Endothelial cell of umbilical vein (primary cell): ENCODE measurements at regions of chr20 and their contacts with region 1.

Region 1: DNA sequence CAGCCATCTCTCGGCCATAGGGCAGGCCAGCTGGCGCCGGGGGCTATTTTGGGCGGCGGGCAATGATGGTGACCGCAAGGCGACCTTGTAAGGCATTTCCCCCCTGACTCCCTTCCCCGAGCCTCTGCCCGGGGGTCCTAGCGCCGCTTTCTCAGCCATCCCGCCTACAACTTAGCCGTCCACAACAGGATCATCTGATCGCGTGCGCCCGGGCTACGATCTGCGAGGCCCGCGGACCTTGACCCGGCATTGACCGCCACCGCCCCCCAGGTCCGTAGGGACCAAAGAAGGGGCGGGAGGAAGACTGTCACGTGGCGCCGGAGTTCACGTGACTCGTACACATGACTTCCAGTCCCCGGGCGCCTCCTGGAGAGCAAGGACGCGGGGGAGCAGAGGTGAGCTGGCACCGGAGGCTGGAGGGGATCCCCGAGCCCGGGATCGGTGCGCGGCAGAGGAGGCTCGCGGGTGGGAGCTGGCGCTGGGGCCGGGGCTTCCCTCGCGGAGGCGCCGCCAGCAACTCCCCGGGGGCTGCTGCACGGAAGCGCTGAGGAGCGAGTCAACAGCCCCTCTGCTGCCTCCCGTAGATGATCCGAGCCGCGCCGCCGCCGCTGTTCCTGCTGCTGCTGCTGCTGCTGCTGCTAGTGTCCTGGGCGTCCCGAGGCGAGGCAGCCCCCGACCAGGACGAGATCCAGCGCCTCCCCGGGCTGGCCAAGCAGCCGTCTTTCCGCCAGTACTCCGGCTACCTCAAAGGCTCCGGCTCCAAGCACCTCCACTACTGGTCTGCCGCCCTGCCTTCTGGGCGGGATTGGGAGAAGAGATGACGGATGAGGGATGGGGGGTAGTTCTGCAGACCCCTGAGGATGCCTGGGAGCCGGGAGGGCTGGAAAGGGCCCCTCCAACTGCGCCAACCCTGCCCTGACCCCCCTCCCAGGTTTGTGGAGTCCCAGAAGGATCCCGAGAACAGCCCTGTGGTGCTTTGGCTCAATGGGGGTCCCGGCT is at the starts of genes CTSA and NEURL2:
- DNase-seq: peak; percentile 88
- H3K4me3 ChIP-seq: peak within 1 kb of the TSS; percentile 47 to 81 (median 57)
- H3K27ac ChIP-seq: peak within 1 kb of the TSS; percentile 50
- H3K4me1 ChIP-seq: peaks cover 22% of the 10 kb centered on the region
- H3K27me3 ChIP-seq: no peaks in the 10 kb centered on the region
- CTCF ChIP-seq: no peak
- POLR2A ChIP-seq: peak; percentile 74
- total RNA-seq, gene CTSA: 156 and 169 TPM in 2 replicates
- total RNA-seq, gene NEURL2: 5.4 and 6.5 TPM in 2 replicates

Region 2: DNA sequence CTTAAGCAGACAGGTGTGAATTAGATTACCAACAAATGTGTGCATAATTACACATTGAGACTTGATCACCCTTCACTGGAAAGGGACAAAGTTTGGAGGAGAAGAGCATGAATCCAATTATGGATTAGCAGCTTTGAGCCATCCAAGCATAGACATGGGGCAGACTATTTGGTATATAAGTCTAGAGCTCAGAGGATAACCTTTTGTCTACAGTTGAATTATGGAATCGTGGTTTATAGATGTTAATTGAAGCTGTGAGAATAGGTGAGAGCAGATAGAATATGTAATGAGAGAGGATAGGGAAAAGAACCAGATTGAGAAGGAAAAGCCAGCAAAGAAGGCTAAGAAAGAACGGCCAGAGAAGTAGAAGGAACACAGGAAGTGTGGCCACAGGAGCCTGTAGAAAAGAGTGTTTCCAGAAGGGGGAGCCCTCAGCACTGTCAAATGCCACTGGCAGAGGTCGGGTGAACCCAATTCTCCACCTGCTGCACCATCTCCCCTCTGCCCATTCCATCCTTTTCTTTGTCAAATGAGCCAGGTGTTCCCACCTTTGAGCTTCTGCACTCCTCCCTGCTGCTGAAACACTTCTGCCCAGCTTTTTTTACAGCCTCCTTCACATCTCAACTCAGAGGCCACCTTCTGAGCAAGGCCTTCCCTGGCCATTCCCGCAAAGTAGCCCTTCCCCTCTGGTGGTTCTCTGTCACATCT is 92.2 kb before region 1 on chr20:
- CTCF ChIA-PET with region 1: interaction called, 7 read pairs
- POLR2A ChIA-PET with region 1: no interaction called
- dilution Hi-C with region 1: no loop called
- intact Hi-C with region 1: loop called (anchors 1 kb)
- DNase-seq: peak; percentile 57
- H3K4me3 ChIP-seq: no peak overlapping the region
- H3K27ac ChIP-seq: no peak overlapping the region
- H3K4me1 ChIP-seq: no peaks in the 10 kb centered on the region
- H3K27me3 ChIP-seq: no peaks in the 10 kb centered on the region
- CTCF ChIP-seq: peak; percentile 69 to 85
- POLR2A ChIP-seq: no peak

Region 3: GRCh38 chr20:45833030-45833882 is 58.0 kb before region 1 on chr20 and contains the start of gene SNX21:
- CTCF ChIA-PET with region 1: interaction called, 6 read pairs
- POLR2A ChIA-PET with region 1: no interaction called
- dilution Hi-C with region 1: no loop called
- intact Hi-C with region 1: loop called (anchors 2 kb)
- DNase-seq: peak; percentile 78
- H3K4me3 ChIP-seq: peak within 1 kb of the TSS; percentile 35 to 64 (median 47)
- H3K27ac ChIP-seq: peak within 1 kb of the TSS; percentile 71
- H3K4me1 ChIP-seq: peaks cover 20% of the 10 kb centered on the region
- H3K27me3 ChIP-seq: no peaks in the 10 kb centered on the region
- CTCF ChIP-seq: no peak
- POLR2A ChIP-seq: no peak
- total RNA-seq, gene SNX21: 11.9 and 14.9 TPM in 2 replicates

Region 4: DNA sequence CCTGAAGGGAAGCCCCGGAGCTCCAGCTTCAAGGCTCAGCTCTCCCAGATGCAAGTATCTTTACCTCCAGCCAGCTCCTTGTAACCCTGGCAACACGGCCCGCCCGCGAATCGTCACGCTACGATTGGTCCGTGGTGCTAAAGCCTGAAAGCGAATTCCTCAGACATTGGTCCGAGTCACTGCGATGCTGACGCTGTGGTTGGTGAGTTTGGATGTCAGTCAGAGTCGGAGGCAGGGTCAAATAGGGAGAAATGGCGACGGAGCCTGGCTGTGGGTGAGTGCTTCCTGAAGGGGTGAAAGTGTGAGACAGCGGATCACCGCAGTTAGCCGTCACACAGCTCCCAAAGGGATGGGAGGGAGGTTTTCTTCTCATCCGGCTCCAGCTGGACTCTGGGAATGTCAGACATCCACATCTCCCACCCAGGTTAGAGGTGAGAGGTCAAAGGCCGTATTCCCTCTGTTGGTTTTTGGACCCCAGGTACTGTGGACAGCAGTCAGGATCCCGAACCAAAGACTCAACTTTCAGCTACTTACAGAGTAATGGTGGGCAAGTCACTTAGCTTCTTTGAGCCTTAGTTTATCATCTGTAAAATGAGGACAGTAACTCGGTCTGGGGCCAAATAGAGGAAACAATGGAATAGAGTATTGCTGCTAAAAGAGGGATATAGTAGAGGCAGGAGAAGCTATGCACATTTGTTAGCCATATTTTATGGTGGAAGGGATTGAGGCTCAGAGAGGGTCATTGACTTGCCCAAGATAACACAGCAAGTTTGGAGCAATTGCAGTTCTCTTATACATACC is 10.1 kb before region 1 on chr20 and contains the start of gene ZSWIM1:
- CTCF ChIA-PET with region 1: interaction called, 24 read pairs
- POLR2A ChIA-PET with region 1: interaction called, 9 read pairs
- dilution Hi-C with region 1: no loop called
- intact Hi-C with region 1: no loop called
- DNase-seq: peak; percentile 100
- H3K4me3 ChIP-seq: peak within 1 kb of the TSS; percentile 51 to 93 (median 89)
- H3K27ac ChIP-seq: peak within 1 kb of the TSS; percentile 66
- H3K4me1 ChIP-seq: peaks cover 11% of the 10 kb centered on the region
- H3K27me3 ChIP-seq: no peaks in the 10 kb centered on the region
- CTCF ChIP-seq: no peak
- POLR2A ChIP-seq: peak; percentile 95
- total RNA-seq, gene ZSWIM1: 10.0 and 11.3 TPM in 2 replicates

Region 5: DNA sequence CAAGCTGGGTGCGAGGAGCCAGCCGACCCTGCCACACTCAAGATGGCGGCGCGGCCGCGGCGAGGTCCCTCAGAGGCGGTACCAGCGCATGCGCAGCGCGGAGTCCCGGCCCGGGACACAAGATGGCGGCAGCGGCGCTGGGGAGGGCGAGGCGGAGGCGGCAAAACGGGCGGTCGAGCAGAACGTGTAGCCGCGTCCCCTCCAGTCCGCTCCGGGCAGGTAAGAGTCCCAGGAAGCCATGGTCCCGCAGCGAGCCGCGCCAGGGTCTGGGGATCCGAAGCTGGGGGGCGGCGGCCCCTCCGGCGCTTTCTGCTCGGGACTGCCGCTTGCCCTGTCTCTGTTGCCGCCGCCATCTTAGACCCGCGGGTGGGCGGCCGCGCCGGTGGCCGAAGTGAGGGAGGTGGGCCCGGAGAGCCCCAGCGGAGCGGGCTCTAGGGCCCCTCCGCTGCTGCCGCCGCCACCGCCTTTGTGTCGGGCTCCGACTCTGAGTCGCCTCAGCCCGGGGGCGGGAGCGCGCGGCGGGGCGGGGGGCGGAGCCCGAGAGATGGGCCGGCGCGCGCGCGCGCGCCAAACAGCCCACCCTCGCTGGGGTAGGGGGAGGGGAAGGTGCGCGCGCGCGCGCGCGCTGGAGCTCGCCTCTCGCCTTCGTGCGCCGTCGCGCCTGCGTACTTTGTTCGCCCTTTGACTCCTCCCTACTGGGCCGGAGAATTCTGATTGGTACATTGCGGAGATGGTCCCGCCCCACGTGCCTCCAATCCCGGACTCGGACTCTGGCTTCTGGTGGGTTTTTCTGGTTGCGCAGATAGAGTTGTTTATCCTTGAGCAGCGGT is 43.5 kb after region 1 on chr20 and contains the start of gene PCIF1:
- CTCF ChIA-PET with region 1: interaction called, 50 read pairs
- POLR2A ChIA-PET with region 1: interaction called, 26 read pairs
- dilution Hi-C with region 1: no loop called
- intact Hi-C with region 1: loop called (anchors 1 kb)
- DNase-seq: peak; percentile 99
- H3K4me3 ChIP-seq: peak within 1 kb of the TSS; percentile 75 to 97 (median 89)
- H3K27ac ChIP-seq: peak within 1 kb of the TSS; percentile 89
- H3K4me1 ChIP-seq: peaks cover 14% of the 10 kb centered on the region
- H3K27me3 ChIP-seq: no peaks in the 10 kb centered on the region
- CTCF ChIP-seq: no peak
- POLR2A ChIP-seq: peak; percentile 94
- total RNA-seq, gene PCIF1: 25.8 and 27.2 TPM in 2 replicates

Region 6: DNA sequence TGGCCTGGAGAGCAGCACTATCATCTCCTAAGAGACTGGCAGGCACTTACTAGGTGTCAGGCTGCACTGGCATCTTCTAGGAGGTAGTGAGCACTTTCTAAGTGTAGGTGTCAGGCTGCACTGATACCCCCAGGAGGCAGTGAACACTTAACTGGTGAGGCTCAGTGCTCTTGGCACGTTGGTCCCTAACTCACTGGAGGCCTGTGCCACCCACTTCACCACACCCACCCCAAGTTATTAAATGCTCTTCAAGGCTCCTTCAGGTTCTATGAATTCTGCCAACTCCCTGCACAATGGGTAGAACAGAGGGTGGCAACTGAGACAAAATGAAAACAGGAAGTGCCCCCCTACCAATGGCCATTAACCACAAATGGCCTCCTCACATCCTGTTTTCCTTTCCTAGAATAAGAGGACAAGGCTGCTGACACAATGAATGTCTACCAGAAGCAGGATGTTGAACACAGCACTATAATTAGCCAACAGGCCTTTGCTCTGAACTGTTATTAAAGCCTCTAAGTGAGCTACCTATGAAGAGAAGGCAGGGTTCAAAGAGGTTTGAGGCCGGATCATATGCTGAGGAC is 169.1 kb after region 1 on chr20:
- CTCF ChIA-PET with region 1: no interaction called
- POLR2A ChIA-PET with region 1: no interaction called
- dilution Hi-C with region 1: no loop called
- intact Hi-C with region 1: no loop called
- DNase-seq: peak; percentile 64
- H3K4me3 ChIP-seq: no peak overlapping the region
- H3K27ac ChIP-seq: peak overlapping the region; percentile 33
- H3K4me1 ChIP-seq: peaks cover 27% of the 10 kb centered on the region
- H3K27me3 ChIP-seq: peaks cover 2 to 23% of the 10 kb centered on the region in 2 experiments
- CTCF ChIP-seq: no peak
- POLR2A ChIP-seq: no peak